ENCODE measurements at regions of chr19 and their contacts with region 1.

Region 1: GRCh38 chr19:49665351-49666119 is at the starts of genes BCL2L12 and IRF3:
- DNase-seq: peak; percentile 99
- H3K4me3 Mint-ChIP-seq: peak within 1 kb of the TSS; percentile 99
- H3K27ac Mint-ChIP-seq: peak within 1 kb of the TSS; percentile 96
- H3K4me1 Mint-ChIP-seq: peaks cover 32% of the 10 kb centered on the region
- H3K27me3 Mint-ChIP-seq: no peaks in the 10 kb centered on the region
- total RNA-seq, gene BCL2L12: 87.2 to 89.1 TPM
- total RNA-seq, gene IRF3: 143 to 156 TPM

Region 2: GRCh38 chr19:48660854-48661731 is 1004.4 kb before region 1 on chr19:
- CTCF ChIA-PET with region 1: no interaction called
- POLR2A ChIA-PET with region 1: no interaction called
- intact Hi-C with region 1: no loop called
- DNase-seq: peak; percentile 86
- H3K4me3 Mint-ChIP-seq: peak overlapping the region; percentile 55
- H3K27ac Mint-ChIP-seq: peak overlapping the region; percentile 79
- H3K4me1 Mint-ChIP-seq: peaks cover 9% of the 10 kb centered on the region
- H3K27me3 Mint-ChIP-seq: no peaks in the 10 kb centered on the region

Region 3: DNA sequence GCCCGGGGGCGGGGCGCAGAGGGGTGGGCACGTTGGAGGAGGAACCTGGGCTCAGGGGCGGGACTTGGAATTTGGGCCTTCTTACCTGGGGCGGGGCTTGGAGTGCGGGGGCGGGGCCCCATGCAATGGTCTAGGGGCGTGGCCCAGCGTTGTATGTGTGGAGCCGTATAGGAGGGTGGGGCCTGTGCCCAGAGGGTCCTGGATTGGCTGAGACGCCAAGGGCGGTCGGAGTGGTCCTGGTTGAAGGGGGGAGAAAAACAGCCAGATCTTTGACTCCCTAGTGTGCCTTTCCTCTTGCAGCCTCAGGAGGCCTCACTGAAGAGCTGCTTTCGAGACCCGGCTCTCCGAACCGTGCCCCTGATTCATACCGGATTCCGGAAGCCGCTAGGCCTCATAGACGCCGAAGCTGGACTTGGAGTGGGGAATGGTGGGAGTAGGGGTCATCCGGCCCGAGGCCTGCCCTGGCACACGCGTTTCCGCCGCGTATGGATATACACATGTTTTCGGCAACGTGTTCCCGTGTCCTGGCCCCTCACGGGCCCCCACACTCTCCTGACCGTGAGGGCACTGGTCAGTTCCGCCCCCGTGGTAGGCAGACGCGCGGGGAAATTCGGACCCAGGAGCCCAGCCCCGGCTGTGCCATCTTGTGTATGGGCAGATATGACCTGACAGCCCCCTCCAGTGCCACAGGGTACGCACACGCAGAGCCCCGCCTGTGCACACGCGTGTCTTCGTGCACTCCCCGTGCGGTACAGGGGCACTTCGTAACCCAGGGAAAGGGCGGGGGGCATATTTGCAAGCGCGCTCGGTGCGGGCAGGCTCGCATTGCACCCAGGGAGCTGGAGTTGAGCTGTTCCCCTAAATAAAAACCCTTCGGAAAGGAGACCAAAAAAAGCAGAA is 75.2 kb before region 1 on chr19:
- CTCF ChIA-PET with region 1: no interaction called
- POLR2A ChIA-PET with region 1: interaction called, 3 read pairs
- intact Hi-C with region 1: loop called (anchors 1 kb)
- DNase-seq: peak; percentile 97
- H3K4me3 Mint-ChIP-seq: peak overlapping the region; percentile 80
- H3K27ac Mint-ChIP-seq: peak overlapping the region; percentile 91
- H3K4me1 Mint-ChIP-seq: peaks cover 32% of the 10 kb centered on the region
- H3K27me3 Mint-ChIP-seq: no peaks in the 10 kb centered on the region

Region 4: DNA sequence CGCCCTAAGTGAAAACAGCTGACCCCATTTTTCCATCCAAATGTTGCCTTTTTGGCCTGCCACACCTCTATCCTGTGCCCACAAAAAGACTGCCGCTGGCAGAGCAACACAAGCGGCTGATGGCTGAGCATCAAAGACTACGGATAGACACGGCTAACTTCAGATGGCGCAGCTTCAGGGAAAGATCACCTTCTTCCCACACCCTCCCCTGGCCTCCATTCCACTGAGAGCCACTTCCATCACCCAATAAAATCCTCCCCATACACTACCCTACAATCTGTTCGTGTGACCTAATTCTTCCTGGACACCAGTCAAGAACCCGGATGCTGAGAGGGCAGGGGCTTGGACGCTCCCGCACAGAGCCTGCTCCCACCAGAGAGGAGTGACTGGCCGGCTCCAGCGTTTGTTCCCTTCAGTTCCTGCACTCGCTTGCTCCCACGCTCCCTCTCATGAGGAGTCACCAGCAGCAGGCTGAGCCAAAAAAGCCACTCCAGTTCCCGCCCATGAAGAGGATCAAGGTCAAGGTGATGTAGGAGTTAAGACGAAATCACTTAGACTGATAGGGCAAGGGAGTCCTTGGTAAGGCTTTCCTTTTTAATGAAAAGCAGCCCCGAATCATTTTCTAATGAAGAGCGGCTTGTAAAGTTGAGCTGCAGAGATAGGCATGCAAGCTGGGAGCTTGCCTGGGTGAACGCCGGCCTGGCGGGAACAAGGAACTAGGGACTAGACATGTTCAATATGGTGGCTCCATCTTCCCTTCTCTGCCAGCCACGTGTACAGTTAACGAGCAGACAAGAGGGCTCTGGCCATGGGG is 61.9 kb after region 1 on chr19:
- CTCF ChIA-PET with region 1: no interaction called
- POLR2A ChIA-PET with region 1: no interaction called
- intact Hi-C with region 1: no loop called
- DNase-seq: no peak
- H3K4me3 Mint-ChIP-seq: no peak overlapping the region
- H3K27ac Mint-ChIP-seq: no peak overlapping the region
- H3K4me1 Mint-ChIP-seq: no peaks in the 10 kb centered on the region
- H3K27me3 Mint-ChIP-seq: peaks cover 1% of the 10 kb centered on the region